ENCODE measurements at regions of chr3 and their contacts with region 1.

Region 1: GRCh38 chr3:43155464-43156121 is 49.7 kb upstream of the POMGNT2 start:
- DNase-seq: peak; percentile 92
- H3K4me3 ChIP-seq: no peak overlapping the region
- H3K27ac ChIP-seq: peak overlapping the region in 2 of 4 donors; percentile 27 to 33
- H3K4me1 ChIP-seq: peaks cover 10 to 36% (median 23%) of the 10 kb centered on the region in 4 donors
- H3K27me3 ChIP-seq: no peaks in the 10 kb centered on the region
- CTCF ChIP-seq: peak; percentile 54 to 77 (median 73)
- EP300 ChIP-seq: no peak
- POLR2A ChIP-seq: no peak

Region 2: GRCh38 chr3:42961633-42962032 is 194.0 kb before region 1 on chr3:
- intact Hi-C with region 1: loop called (anchors 2 kb)
- DNase-seq: no peak
- H3K4me3 ChIP-seq: no peak overlapping the region
- H3K27ac ChIP-seq: no peak overlapping the region
- H3K4me1 ChIP-seq: peaks cover 0 to 9% (median 8%) of the 10 kb centered on the region in 4 donors
- H3K27me3 ChIP-seq: no peaks in the 10 kb centered on the region
- CTCF ChIP-seq: peak; percentile 72 to 74 (median 72)
- EP300 ChIP-seq: no peak
- POLR2A ChIP-seq: no peak

Region 3: DNA sequence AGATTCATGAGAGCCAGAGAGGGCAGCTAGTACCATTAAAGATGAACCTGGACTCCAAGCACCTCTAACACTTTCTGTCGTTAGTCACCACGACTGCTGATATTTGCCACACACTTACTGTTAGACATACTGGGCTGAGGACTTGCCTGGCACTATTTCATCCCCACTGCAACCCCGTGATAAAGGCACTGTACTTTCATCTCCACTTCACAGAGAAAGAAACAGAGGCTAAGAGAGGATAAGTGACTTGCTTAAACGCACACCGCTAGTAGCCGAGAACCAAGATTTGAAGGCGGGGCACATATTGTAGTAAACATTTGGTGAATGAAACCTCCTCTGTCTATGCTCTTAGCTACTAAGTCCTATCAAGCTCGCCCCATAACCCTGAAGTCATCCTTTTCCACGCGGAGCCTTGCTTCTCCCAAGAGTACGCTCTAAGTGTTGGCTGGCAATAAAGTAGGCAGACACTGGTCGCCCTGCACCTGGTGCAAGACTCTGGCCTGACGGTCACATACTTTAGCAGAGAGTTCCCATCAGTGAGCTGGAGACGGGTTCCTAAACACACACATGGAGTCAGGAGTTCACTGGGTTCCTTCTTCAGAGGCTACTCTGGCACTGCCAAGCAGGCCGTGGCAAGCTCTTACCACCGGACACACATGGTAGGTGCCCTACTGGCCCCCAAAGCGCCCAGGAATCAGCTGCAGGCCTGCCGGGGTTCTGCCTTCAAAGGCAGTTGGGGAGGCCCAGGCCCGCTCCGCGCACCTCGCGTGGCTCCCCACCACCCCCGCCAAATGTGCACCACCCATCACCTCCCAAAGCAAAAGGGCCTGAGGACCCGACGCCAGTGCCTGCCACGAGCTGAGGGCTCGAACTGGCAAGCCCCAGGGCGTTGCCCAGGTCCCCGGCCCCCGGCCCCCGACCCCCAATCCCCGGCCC is 50.7 kb before region 1 on chr3:
- intact Hi-C with region 1: loop called (anchors 5 kb)
- DNase-seq: no peak
- H3K4me3 ChIP-seq: peak overlapping the region; percentile 79 to 91 (median 87)
- H3K27ac ChIP-seq: peak overlapping the region; percentile 68 to 78 (median 74)
- H3K4me1 ChIP-seq: peaks cover 7 to 40% (median 34%) of the 10 kb centered on the region in 4 donors
- H3K27me3 ChIP-seq: no peaks in the 10 kb centered on the region
- CTCF ChIP-seq: no peak
- EP300 ChIP-seq: no peak
- POLR2A ChIP-seq: no peak